Breast epithelium (tissue), 4 donors: ENCODE measurements at regions of chr3 and their contacts with region 1.

Region 1: GRCh38 chr3:194315088-194315964 is 35.8 kb downstream of the CPN2 start:
- DNase-seq: peak; percentile 70 to 85
- H3K4me3 ChIP-seq: peak overlapping the region; percentile 30 to 67 (median 51)
- H3K27ac ChIP-seq: peak overlapping the region; percentile 78
- H3K4me1 ChIP-seq: peaks cover 9 to 16% of the 10 kb centered on the region in 2 donors
- H3K27me3 ChIP-seq: no peaks in the 10 kb centered on the region
- CTCF ChIP-seq: peak; percentile 87 to 99 (median 92)
- POLR2A ChIP-seq: no peak

Region 2: GRCh38 chr3:193780810-193781472 is 534.4 kb before region 1 on chr3:
- intact Hi-C with region 1: loop called (anchors 5 kb)
- DNase-seq: peak; percentile 67 to 71
- H3K4me3 ChIP-seq: no peak overlapping the region
- H3K27ac ChIP-seq: peak overlapping the region; percentile 72 to 77
- H3K4me1 ChIP-seq: peaks cover 3 to 15% of the 10 kb centered on the region in 2 donors
- H3K27me3 ChIP-seq: no peaks in the 10 kb centered on the region
- CTCF ChIP-seq: peak; percentile 52 to 89 (median 87)
- POLR2A ChIP-seq: no peak

Region 3: DNA sequence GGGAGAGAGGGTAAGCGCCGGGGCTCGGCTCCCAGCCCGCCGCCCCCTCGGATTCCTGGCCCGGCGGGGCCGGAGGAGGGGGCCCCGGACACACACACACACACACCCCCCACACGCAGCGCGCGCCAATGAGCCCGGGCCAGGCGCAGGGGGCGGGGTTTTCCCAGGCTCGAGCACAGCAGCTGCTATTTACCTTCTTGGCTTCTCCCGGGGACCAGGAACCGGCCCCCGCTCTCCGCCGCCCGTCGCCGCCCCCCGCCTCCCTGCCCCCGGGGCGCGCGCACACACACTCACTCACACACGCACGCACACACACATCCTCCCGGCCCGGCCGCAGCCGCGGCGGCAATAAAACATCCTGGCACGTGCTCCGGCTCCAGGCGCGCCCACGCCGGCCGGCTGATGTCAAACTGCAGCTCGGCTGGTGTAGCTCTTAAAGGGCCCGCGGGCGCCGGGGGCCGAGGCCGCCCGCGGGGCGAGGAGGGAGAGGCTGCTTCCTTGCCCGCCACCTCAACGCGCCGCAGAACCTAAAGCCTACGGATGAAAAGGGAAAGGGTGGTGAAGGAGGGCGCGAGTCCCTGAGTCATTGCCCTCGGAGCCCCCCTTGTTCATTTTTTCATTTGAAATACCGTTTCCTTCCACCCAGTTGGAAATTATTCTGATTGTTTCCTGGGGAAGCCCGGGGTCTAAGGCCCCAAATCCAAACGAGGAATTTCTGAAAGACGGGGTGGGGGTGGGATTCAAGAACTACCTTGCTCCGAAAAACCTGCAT is 180.4 kb before region 1 on chr3:
- intact Hi-C with region 1: loop called (anchors 10 kb)
- DNase-seq: peak; percentile 93
- H3K4me3 ChIP-seq: peak overlapping the region; percentile 58 to 89 (median 69)
- H3K27ac ChIP-seq: peak overlapping the region; percentile 99
- H3K4me1 ChIP-seq: peaks cover 8% of the 10 kb centered on the region in 2 donors
- H3K27me3 ChIP-seq: no peaks in the 10 kb centered on the region
- CTCF ChIP-seq: no peak
- POLR2A ChIP-seq: peak; percentile 38